SK-N-SH (cell line): ENCODE measurements at regions of chr17 and their contacts with region 1.

Region 1: GRCh38 chr17:78176548-78177025 is 8.2 kb downstream of the SYNGR2 start:
- DNase-seq: peak; percentile 90
- H3K4me3 ChIP-seq: peak overlapping the region in 1 of 2 experiments; percentile 25; a peak in 1 of 4 replicates
- H3K27ac ChIP-seq: no peak overlapping the region
- H3K4me1 ChIP-seq: peaks cover 5 to 8% of the 10 kb centered on the region in 2 experiments; a peak in 2 of 4 replicates
- H3K27me3 ChIP-seq: no peaks in the 10 kb centered on the region
- CTCF ChIP-seq: peak; percentile 93
- EP300 ChIP-seq: no peak
- RAD21 ChIP-seq: peak; percentile 74

Region 2: DNA sequence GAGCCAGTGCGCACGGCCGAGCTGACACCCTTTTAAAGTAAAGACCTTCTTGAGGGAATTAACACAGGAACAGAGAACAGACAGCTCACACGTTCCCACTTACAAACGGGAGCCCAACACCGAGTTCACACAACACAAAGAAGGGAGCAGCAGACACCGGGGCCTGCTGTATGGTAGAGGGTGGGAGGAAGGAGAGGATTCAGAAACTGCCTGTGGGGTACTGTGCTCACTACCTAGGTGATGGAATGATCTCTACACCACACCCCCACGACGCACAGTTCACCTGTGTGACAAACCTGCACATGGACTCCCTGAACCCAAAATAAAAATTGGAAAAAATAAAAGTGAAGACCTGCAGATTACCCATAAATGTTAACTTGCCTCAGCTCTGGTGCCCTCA is 80.5 kb before region 1 on chr17:
- CTCF ChIA-PET with region 1: interaction called, 12 read pairs
- POLR2A ChIA-PET with region 1: interaction called, 5 read pairs
- DNase-seq: no peak
- H3K4me3 ChIP-seq: no peak overlapping the region
- H3K27ac ChIP-seq: no peak overlapping the region
- H3K4me1 ChIP-seq: peaks cover 0 to 3% of the 10 kb centered on the region in 2 experiments; a peak in 1 of 4 replicates
- H3K27me3 ChIP-seq: no peaks in the 10 kb centered on the region
- CTCF ChIP-seq: no peak
- EP300 ChIP-seq: no peak
- RAD21 ChIP-seq: no peak

Region 3: GRCh38 chr17:78112518-78113226 is 63.9 kb before region 1 on chr17:
- CTCF ChIA-PET with region 1: interaction called, 131 read pairs
- POLR2A ChIA-PET with region 1: interaction called, 5 read pairs
- DNase-seq: peak; percentile 98
- H3K4me3 ChIP-seq: no peak overlapping the region
- H3K27ac ChIP-seq: no peak overlapping the region
- H3K4me1 ChIP-seq: peaks cover 0 to 14% of the 10 kb centered on the region in 2 experiments; a peak in 1 of 4 replicates
- H3K27me3 ChIP-seq: 0 out of 2 replicates have a peak, but pooled peaks cover 6% of the 10 kb centered on the region
- CTCF ChIP-seq: peak; percentile 100
- EP300 ChIP-seq: no peak
- RAD21 ChIP-seq: peak; percentile 96

Region 4: GRCh38 chr17:78144147-78144719 is 32.4 kb before region 1 on chr17:
- CTCF ChIA-PET with region 1: interaction called, 10 read pairs
- POLR2A ChIA-PET with region 1: no interaction called
- DNase-seq: peak; percentile 73
- H3K4me3 ChIP-seq: no peak overlapping the region
- H3K27ac ChIP-seq: no peak overlapping the region
- H3K4me1 ChIP-seq: peaks cover 4 to 19% of the 10 kb centered on the region in 2 experiments; a peak in 2 of 4 replicates
- H3K27me3 ChIP-seq: no peaks in the 10 kb centered on the region
- CTCF ChIP-seq: no peak; the same call in 1 of the 2 replicates
- EP300 ChIP-seq: no peak
- RAD21 ChIP-seq: no peak

Region 5: DNA sequence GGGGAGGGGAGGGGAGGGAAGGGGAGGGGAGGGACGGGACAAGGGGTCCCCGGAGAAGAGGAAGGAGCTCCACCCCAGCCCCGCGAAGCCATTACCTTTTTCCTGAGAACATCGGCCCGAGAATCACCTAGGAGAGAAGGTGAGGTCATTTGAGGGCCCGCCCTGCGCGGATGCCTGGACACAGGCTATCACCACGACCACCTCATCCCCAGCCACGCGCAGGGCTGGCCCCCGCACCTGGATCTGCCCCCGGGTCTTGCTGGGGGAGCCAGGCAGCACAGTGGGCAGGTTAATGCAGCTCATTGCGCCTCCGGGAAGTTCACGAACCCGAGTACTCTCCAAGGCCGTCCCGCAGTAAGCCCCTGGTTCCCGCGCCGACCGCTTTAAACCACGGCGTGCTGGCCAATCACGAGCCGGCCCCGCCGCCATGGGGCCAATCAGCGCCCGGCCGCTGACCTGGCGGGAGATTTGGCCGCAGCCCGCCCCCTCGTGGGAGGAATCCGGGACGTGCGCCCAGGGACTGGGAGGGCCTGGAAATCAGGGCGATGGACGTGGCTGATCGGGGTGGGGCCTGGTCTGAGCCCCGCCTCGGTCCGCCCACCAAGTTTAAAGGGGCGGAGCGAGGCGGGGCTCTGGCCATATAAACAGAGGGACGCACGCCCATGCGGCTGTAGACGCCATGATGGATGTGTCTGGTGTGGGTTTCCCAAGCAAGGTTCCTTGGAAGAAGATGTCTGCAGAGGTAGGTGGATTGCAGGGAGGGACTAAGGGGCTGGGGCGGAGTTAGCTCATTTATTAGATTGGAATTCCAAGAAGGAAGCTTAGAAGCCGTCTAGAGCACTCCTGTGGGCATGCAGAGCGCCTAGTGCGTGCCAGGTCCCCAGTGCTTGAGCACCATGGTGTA is 10.4 kb after region 1 on chr17 and contains the starts of genes AFMID and TK1:
- CTCF ChIA-PET with region 1: interaction called, 70 read pairs
- POLR2A ChIA-PET with region 1: interaction called, 3 read pairs
- DNase-seq: peak; percentile 100
- H3K4me3 ChIP-seq: peak within 1 kb of the TSS; percentile 54 to 78
- H3K27ac ChIP-seq: peak within 1 kb of the TSS; percentile 26 to 48; a peak in 2 of 4 replicates
- H3K4me1 ChIP-seq: peaks cover 7% of the 10 kb centered on the region in 2 experiments; a peak in 2 of 4 replicates
- H3K27me3 ChIP-seq: no peaks in the 10 kb centered on the region
- CTCF ChIP-seq: peak; percentile 85
- EP300 ChIP-seq: no peak
- RAD21 ChIP-seq: peak; percentile 35
- polyA plus RNA-seq, gene AFMID: 44.4 and 59.0 TPM in 2 replicates
- polyA plus RNA-seq, gene TK1: 70.7 and 112 TPM in 2 replicates

Region 6: GRCh38 chr17:78226749-78227399 is 50.3 kb after region 1 on chr17:
- CTCF ChIA-PET with region 1: interaction called, 17 read pairs
- POLR2A ChIA-PET with region 1: no interaction called
- DNase-seq: no peak
- H3K4me3 ChIP-seq: no peak overlapping the region
- H3K27ac ChIP-seq: peak overlapping the region in 1 of 2 experiments; percentile 98; a peak in 2 of 4 replicates
- H3K4me1 ChIP-seq: peaks cover 8 to 54% of the 10 kb centered on the region in 2 experiments; a peak in 3 of 4 replicates
- H3K27me3 ChIP-seq: peaks cover 11% of the 10 kb centered on the region
- CTCF ChIP-seq: no peak
- EP300 ChIP-seq: no peak
- RAD21 ChIP-seq: no peak

Region 7: GRCh38 chr17:78307872-78308638 is 131.5 kb after region 1 on chr17:
- CTCF ChIA-PET with region 1: no interaction called
- POLR2A ChIA-PET with region 1: no interaction called
- DNase-seq: peak; percentile 51
- H3K4me3 ChIP-seq: no peak overlapping the region
- H3K27ac ChIP-seq: no peak overlapping the region
- H3K4me1 ChIP-seq: peaks cover 0 to 7% of the 10 kb centered on the region in 2 experiments; a peak in 1 of 4 replicates
- H3K27me3 ChIP-seq: no peaks in the 10 kb centered on the region
- CTCF ChIP-seq: no peak; the same call in 1 of the 2 replicates
- EP300 ChIP-seq: no peak
- RAD21 ChIP-seq: no peak